Activated CD8-positive, alpha-beta T cell treated with anti-CD3 and anti-CD28 coated beads for 36 hours (primary cell): ENCODE measurements at regions of chr3 and their contacts with region 1.

Region 1: DNA sequence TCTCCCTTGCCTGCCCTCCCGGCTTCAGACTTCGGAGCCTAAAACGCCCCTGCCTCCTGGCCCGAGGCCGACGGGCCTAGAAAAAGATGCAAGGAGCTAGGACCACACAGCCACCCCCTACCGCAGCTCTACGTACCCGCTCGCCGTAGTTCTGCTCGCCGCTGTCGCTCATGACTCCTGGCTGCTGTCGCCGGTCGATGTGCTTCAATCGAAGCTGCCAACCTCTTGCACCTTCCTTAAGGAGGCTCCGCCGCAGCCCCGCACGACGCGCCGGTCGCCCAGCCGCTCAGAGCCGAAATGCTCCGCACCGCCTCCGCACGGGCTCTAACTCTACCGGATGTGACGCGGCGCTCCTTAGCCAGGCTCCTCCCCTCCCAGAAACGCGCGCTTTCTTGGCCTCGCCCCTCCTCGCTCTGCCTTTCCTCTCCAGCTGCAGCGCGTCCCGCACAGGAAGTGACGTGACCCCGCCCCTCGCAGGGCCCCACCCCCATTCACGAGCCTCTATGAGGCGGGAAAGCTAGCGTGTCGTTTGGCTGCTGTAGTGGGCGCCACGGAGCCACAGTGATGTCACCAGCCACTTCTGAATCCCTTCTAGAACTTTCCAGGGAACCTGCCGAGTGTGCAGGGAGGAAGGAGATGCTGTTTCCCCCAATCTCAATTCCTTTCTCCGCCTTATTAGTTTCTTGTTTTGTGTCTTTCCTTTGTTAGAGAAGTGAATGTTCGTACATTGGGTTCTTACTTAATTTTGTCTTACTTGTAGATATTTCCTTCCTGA is at the start of gene TRA2B:
- DNase-seq: peak; percentile 99
- ATAC-seq: peak; percentile 94
- H3K4me3 Mint-ChIP-seq: peak within 1 kb of the TSS; percentile 100
- H3K27ac Mint-ChIP-seq: peak within 1 kb of the TSS; percentile 100
- H3K4me1 Mint-ChIP-seq: peaks cover 19% of the 10 kb centered on the region
- H3K27me3 Mint-ChIP-seq: peaks cover 3% of the 10 kb centered on the region
- CTCF ChIP-seq: peak; percentile 27
- total RNA-seq, gene TRA2B: 210 to 219 TPM

Region 2: DNA sequence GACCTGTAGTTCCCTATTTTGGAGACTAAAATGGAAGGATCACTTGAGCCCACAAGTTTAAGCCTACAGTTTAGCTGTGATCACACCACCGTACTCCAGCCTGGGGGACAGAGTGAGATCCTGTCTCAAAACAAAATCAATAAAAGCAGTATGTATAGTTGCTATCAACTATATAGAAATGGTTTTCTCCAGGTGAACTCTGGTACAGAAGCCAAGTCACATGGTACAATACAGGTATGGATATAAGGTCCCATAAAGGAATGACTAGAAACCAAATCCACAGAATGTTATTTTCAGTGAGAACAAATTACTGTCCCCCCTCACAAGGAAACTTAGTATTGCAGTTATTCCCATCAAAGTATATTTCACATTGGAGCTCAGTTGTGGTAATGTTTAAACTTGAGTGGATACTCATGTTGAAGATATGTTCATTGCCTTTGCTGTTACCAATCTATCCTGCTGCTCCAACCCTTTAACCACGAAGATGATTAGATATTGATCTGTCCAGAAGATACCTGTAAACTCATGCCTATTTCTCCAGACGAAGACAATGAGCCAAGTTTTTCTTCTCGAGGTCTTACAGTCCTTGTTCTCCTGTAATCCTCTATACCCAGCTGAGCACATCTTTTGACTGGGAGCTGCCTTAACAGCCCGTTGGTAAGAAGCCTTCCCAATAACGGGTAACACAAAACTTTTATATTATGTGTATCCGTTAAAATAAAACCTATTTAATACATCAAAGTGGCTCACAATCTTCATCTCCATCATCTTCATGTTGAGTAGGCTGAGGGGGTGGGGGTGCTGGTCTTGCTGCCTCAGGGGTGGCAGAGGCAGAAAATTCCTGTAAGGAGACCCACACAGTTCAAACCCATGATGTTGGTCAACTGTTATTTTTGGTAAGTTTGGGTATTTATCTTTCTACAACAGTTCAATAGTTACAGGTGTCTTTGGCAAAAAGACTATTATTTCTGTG is 24.7 kb before region 1 on chr3:
- CTCF ChIA-PET with region 1: interaction called, 10 read pairs
- POLR2A ChIA-PET with region 1: interaction called, 20 read pairs
- intact Hi-C with region 1: no loop called
- DNase-seq: no peak
- ATAC-seq: peak; percentile 10
- H3K4me3 Mint-ChIP-seq: no peak overlapping the region
- H3K27ac Mint-ChIP-seq: peak overlapping the region; percentile 40
- H3K4me1 Mint-ChIP-seq: peaks cover 2% of the 10 kb centered on the region
- H3K27me3 Mint-ChIP-seq: no peaks in the 10 kb centered on the region
- CTCF ChIP-seq: no peak

Region 3: DNA sequence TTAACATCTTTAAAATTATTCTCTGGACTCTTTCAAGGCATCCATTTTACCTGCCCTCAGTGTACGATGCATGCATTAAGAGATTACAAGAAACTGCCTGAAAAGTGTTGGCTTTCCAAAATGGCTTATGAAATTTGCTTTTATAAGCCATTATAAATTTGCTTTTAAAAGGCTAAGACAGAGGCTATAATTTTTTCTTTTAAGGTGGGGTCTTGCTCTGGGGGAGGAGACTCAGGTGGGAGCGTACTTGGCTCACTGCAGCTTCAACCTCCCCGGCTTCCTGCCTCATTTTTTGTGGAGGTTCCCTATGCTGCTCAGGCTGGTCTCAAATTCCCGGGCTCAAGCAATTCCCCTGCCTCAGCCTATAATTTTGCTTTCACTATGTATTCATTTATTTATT is 17.7 kb before region 1 on chr3:
- CTCF ChIA-PET with region 1: interaction called, 93 read pairs
- POLR2A ChIA-PET with region 1: interaction called, 144 read pairs
- intact Hi-C with region 1: no loop called
- DNase-seq: no peak
- ATAC-seq: no peak
- H3K4me3 Mint-ChIP-seq: no peak overlapping the region
- H3K27ac Mint-ChIP-seq: no peak overlapping the region
- H3K4me1 Mint-ChIP-seq: peaks cover 20% of the 10 kb centered on the region
- H3K27me3 Mint-ChIP-seq: no peaks in the 10 kb centered on the region
- CTCF ChIP-seq: no peak

Region 4: GRCh38 chr3:185959609-185960517 is 22.0 kb after region 1 on chr3:
- CTCF ChIA-PET with region 1: interaction called, 186 read pairs
- POLR2A ChIA-PET with region 1: interaction called, 15 read pairs
- intact Hi-C with region 1: no loop called
- DNase-seq: peak; percentile 14
- ATAC-seq: peak; percentile 47
- H3K4me3 Mint-ChIP-seq: no peak overlapping the region
- H3K27ac Mint-ChIP-seq: no peak overlapping the region
- H3K4me1 Mint-ChIP-seq: peaks cover 2% of the 10 kb centered on the region
- H3K27me3 Mint-ChIP-seq: peaks cover 7% of the 10 kb centered on the region
- CTCF ChIP-seq: no peak

Region 5: DNA sequence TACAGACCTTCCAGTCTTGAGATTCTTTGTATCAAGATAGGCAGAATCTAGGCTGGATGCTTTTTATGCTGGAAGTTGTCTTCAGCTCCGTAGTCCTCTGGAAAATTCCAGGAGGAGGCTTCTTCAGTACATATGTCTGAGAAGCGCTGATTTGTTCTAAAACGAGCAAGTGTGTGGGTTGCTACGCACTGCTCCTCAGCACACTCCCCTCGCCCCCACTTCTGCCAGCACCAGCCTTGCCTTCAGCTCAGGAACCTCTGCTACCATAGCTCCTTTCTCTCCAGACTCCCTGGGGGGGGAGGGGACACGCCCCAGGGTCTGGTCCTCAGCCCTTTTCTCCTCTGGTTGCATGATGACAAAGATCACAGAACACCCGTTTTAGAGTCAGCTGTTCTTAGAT is 75.4 kb after region 1 on chr3:
- CTCF ChIA-PET with region 1: no interaction called
- POLR2A ChIA-PET with region 1: no interaction called
- intact Hi-C with region 1: no loop called
- DNase-seq: no peak
- ATAC-seq: no peak
- H3K4me3 Mint-ChIP-seq: no peak overlapping the region
- H3K27ac Mint-ChIP-seq: no peak overlapping the region
- H3K4me1 Mint-ChIP-seq: no peaks in the 10 kb centered on the region
- H3K27me3 Mint-ChIP-seq: peaks cover 13% of the 10 kb centered on the region
- CTCF ChIP-seq: no peak

Region 6: DNA sequence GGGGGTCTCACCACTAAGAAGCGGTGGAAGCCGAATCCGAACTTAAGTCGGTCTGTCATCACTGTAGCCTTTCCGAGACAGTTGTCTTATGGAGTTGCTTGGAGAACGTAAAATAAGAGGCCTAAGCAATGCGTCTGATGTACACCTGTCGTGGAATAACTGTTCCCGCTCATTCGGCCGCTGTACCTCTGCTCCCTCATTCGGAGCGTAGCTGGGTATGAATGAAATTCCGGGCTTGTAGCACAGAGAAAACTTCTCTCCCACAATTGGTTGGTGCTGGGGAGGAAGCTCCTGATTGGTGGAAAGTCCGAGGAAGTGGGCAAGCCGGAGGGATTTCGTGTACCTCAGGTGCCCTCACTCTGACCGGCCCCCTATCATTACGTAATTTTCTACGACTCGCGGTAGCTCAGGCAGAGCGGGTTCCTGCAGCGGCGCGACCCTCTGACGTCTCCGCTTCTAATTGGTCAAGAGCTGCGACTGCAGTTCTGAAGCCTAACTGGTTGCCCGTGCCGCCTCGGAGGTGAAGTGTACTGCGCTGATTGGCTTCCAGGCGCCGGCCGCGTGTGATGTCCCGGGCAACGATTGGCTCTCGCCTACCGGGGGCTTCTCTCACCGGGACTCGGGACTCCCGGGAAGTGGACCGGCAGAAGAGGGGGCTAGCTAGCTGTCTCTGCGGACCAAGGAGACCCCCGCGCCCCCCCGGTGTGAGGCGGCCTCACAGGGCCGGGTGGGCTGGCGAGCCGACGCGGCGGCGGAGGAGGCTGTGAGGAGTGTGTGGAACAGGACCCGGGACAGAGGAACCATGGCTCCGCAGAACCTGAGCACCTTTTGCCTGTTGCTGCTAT is 632.4 kb after region 1 on chr3 and contains the start of gene DNAJB11:
- CTCF ChIA-PET with region 1: interaction called, 5 read pairs
- POLR2A ChIA-PET with region 1: interaction called, 28 read pairs
- intact Hi-C with region 1: no loop called
- DNase-seq: peak; percentile 100
- ATAC-seq: peak; percentile 91
- H3K4me3 Mint-ChIP-seq: peak within 1 kb of the TSS; percentile 93
- H3K27ac Mint-ChIP-seq: peak within 1 kb of the TSS; percentile 95
- H3K4me1 Mint-ChIP-seq: peaks cover 54% of the 10 kb centered on the region
- H3K27me3 Mint-ChIP-seq: no peaks in the 10 kb centered on the region
- CTCF ChIP-seq: no peak
- total RNA-seq, gene DNAJB11: 30.0 to 31.5 TPM

Region 7: GRCh38 chr3:186790261-186790981 is 852.5 kb after region 1 on chr3:
- CTCF ChIA-PET with region 1: no interaction called
- POLR2A ChIA-PET with region 1: interaction called, 85 read pairs
- intact Hi-C with region 1: loop called (anchors 5 kb)
- DNase-seq: peak; percentile 21
- ATAC-seq: peak; percentile 29
- H3K4me3 Mint-ChIP-seq: no peak overlapping the region
- H3K27ac Mint-ChIP-seq: peak overlapping the region; percentile 61
- H3K4me1 Mint-ChIP-seq: peaks cover 38% of the 10 kb centered on the region
- H3K27me3 Mint-ChIP-seq: no peaks in the 10 kb centered on the region
- CTCF ChIP-seq: no peak